Naive thymus-derived CD4-positive, alpha-beta T cell (primary cell): ENCODE measurements at regions of chr10 and their contacts with region 1.

Region 1: DNA sequence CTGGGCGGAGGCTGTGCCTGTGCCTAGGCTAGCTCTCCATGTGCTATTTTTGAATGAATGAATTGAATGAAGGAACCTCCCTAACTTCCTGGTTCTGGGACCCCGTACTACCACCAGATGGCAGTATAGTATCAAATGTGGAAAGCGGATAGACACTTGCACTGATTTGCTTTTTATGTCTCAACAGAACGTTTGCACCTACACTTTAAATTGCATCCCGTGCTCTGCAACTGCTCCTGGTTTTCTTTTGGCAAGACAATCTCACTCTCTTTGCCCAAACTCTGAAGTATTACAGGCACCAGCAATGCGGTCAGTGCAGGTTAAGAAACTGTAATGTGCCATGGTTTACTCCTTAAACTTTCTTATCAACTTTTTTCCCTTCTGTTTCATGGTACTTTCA is 6.5 kb downstream of the FZD8 start:
- DNase-seq: peak in 8 of 9 donors; percentile 29 to 68 (median 59)
- ATAC-seq: peak; percentile 83
- H3K4me3 ChIP-seq: no peak overlapping the region
- H3K4me3 Mint-ChIP-seq: no peak overlapping the region
- H3K27ac ChIP-seq: no peak overlapping the region
- H3K27ac Mint-ChIP-seq: no peak overlapping the region
- H3K4me1 ChIP-seq: peaks cover 0 to 5% of the 10 kb centered on the region in 2 donors
- H3K4me1 Mint-ChIP-seq: peaks cover 7 to 22% (median 10%) of the 10 kb centered on the region in 7 donors
- H3K27me3 ChIP-seq: peaks cover 0 to 16% of the 10 kb centered on the region in 2 donors
- H3K27me3 Mint-ChIP-seq: peaks cover 28 to 47% (median 36%) of the 10 kb centered on the region in 5 donors

Region 2: DNA sequence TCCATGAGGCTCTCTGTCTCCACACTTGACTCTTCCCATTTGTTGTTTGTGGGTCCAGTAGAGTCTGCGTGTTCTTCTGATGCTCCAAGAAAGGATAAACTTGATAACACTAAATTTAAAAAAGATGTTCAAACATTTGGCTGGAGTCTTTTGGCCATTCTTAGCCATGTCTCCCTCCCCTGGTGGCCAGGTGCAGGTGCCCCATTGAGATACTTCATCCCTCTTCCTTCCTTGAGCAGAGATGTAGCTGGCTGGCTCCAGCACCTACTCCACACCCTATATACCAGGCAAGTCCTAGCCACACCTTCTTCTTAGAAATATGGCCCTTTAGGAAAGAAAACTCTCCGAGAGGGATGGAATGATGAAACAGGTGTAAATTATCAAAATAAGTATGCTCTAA is 133.7 kb before region 1 on chr10:
- CTCF ChIA-PET with region 1: no interaction called
- POLR2A ChIA-PET with region 1: no interaction called
- intact Hi-C with region 1: no loop called
- DNase-seq: no peak
- ATAC-seq: no peak
- H3K4me3 ChIP-seq: no peak overlapping the region
- H3K4me3 Mint-ChIP-seq: no peak overlapping the region
- H3K27ac ChIP-seq: no peak overlapping the region
- H3K27ac Mint-ChIP-seq: peak overlapping the region in 1 of 9 donors; percentile 22
- H3K4me1 ChIP-seq: no peaks in the 10 kb centered on the region
- H3K4me1 Mint-ChIP-seq: peaks cover 6 to 73% (median 59%) of the 10 kb centered on the region in 7 donors
- H3K27me3 ChIP-seq: no peaks in the 10 kb centered on the region
- H3K27me3 Mint-ChIP-seq: no peaks in the 10 kb centered on the region

Region 3: GRCh38 chr10:35781643-35782035 is 146.1 kb after region 1 on chr10:
- CTCF ChIA-PET with region 1: interaction called, 3 read pairs
- POLR2A ChIA-PET with region 1: no interaction called
- intact Hi-C with region 1: loop called (anchors 1 kb)
- DNase-seq: no peak
- ATAC-seq: no peak
- H3K4me3 ChIP-seq: no peak overlapping the region
- H3K4me3 Mint-ChIP-seq: no peak overlapping the region
- H3K27ac ChIP-seq: no peak overlapping the region
- H3K27ac Mint-ChIP-seq: no peak overlapping the region
- H3K4me1 ChIP-seq: no peaks in the 10 kb centered on the region
- H3K4me1 Mint-ChIP-seq: no peaks in the 10 kb centered on the region
- H3K27me3 ChIP-seq: no peaks in the 10 kb centered on the region
- H3K27me3 Mint-ChIP-seq: peaks cover 0 to 11% (median 5%) of the 10 kb centered on the region in 5 donors

Region 4: GRCh38 chr10:35916791-35917190 is 281.2 kb after region 1 on chr10:
- CTCF ChIA-PET with region 1: interaction called, 4 read pairs
- POLR2A ChIA-PET with region 1: no interaction called
- intact Hi-C with region 1: loop called in 1 of 2 experiments (anchors 1 kb)
- DNase-seq: no peak
- ATAC-seq: no peak
- H3K4me3 ChIP-seq: no peak overlapping the region
- H3K4me3 Mint-ChIP-seq: no peak overlapping the region
- H3K27ac ChIP-seq: no peak overlapping the region
- H3K27ac Mint-ChIP-seq: no peak overlapping the region
- H3K4me1 ChIP-seq: no peaks in the 10 kb centered on the region
- H3K4me1 Mint-ChIP-seq: no peaks in the 10 kb centered on the region
- H3K27me3 ChIP-seq: no peaks in the 10 kb centered on the region
- H3K27me3 Mint-ChIP-seq: peaks cover 0 to 11% (median 7%) of the 10 kb centered on the region in 5 donors

Region 5: GRCh38 chr10:36725581-36726520 is 1090.3 kb after region 1 on chr10:
- CTCF ChIA-PET with region 1: interaction called, 3 read pairs
- POLR2A ChIA-PET with region 1: no interaction called
- intact Hi-C with region 1: loop called in 1 of 2 experiments (anchors 5 kb)
- DNase-seq: no peak
- ATAC-seq: no peak
- H3K4me3 ChIP-seq: no peak overlapping the region
- H3K4me3 Mint-ChIP-seq: no peak overlapping the region
- H3K27ac ChIP-seq: no peak overlapping the region
- H3K27ac Mint-ChIP-seq: no peak overlapping the region
- H3K4me1 ChIP-seq: no peaks in the 10 kb centered on the region
- H3K4me1 Mint-ChIP-seq: peaks cover 0 to 2% (median 0%) of the 10 kb centered on the region in 7 donors
- H3K27me3 ChIP-seq: no peaks in the 10 kb centered on the region
- H3K27me3 Mint-ChIP-seq: no peaks in the 10 kb centered on the region

Region 6: DNA sequence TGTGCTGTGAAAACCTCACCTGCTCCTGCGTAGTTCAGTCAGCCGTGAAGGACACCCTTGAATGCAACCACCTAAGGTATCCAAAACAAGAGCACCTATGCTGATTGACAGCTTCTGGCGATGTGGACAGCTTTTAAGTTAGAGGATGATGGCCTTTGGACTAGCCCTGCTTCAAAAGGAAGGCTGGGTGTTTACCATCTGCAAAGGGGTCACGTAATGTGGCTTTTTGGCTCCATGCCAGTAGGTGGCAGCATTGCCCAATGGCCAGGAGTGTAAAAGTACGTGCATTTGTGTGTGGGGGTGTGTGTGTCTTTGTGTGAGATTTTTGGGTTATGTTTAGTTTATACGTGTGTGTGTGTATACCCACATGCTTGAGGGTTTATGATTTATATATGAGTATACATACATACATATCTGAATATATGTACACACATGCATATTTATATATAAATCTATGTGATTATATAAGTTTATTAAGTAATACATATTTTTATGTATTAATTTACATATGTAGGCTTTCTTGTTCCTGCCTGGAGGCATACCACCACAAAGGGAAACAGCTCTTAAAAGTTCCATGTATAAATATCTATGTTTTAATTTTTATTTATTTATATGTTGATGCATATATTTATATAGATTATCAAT is 1253.5 kb after region 1 on chr10:
- CTCF ChIA-PET with region 1: no interaction called
- POLR2A ChIA-PET with region 1: no interaction called
- intact Hi-C with region 1: loop called in 1 of 2 experiments (anchors 10 kb)
- DNase-seq: peak in 6 of 9 donors; percentile 6 to 38 (median 27)
- ATAC-seq: no peak
- H3K4me3 ChIP-seq: no peak overlapping the region
- H3K4me3 Mint-ChIP-seq: no peak overlapping the region
- H3K27ac ChIP-seq: no peak overlapping the region
- H3K27ac Mint-ChIP-seq: peak overlapping the region in 1 of 9 donors; percentile 14
- H3K4me1 ChIP-seq: no peaks in the 10 kb centered on the region
- H3K4me1 Mint-ChIP-seq: no peaks in the 10 kb centered on the region
- H3K27me3 ChIP-seq: no peaks in the 10 kb centered on the region
- H3K27me3 Mint-ChIP-seq: no peaks in the 10 kb centered on the region